Activated CD4-positive, alpha-beta T cell treated with anti-CD3 and anti-CD28 coated beads for 36 hours (primary cell): ENCODE measurements at regions of chr9 and their contacts with region 1.

Region 1: GRCh38 chr9:7656636-7657035 is 142.9 kb downstream of the DMAC1 start:
- DNase-seq: no peak
- ATAC-seq: no peak
- H3K4me3 Mint-ChIP-seq: no peak overlapping the region
- H3K27ac Mint-ChIP-seq: no peak overlapping the region
- H3K4me1 Mint-ChIP-seq: no peaks in the 10 kb centered on the region
- H3K27me3 Mint-ChIP-seq: no peaks in the 10 kb centered on the region

Region 2: GRCh38 chr9:7570107-7570720 is 86.4 kb before region 1 on chr9:
- CTCF ChIA-PET with region 1: interaction called, 3 read pairs
- POLR2A ChIA-PET with region 1: no interaction called
- intact Hi-C with region 1: loop called in 1 of 2 experiments (anchors 1 kb)
- DNase-seq: peak; percentile 77
- ATAC-seq: peak; percentile 70
- H3K4me3 Mint-ChIP-seq: no peak overlapping the region
- H3K27ac Mint-ChIP-seq: no peak overlapping the region
- H3K4me1 Mint-ChIP-seq: peaks cover 4% of the 10 kb centered on the region
- H3K27me3 Mint-ChIP-seq: peaks cover 5% of the 10 kb centered on the region

Region 3: GRCh38 chr9:7710686-7711085 is 54.0 kb after region 1 on chr9:
- CTCF ChIA-PET with region 1: no interaction called
- POLR2A ChIA-PET with region 1: no interaction called
- intact Hi-C with region 1: loop called in 1 of 2 experiments (anchors 10 kb)
- DNase-seq: no peak
- ATAC-seq: no peak
- H3K4me3 Mint-ChIP-seq: no peak overlapping the region
- H3K27ac Mint-ChIP-seq: no peak overlapping the region
- H3K4me1 Mint-ChIP-seq: no peaks in the 10 kb centered on the region
- H3K27me3 Mint-ChIP-seq: no peaks in the 10 kb centered on the region